ENCODE measurements at regions of chr2 and their contacts with region 1.

Region 1: GRCh38 chr2:150535176-150535575 is 47.7 kb upstream of the RND3 start:
- DNase-seq: no peak
- ATAC-seq: no peak
- H3K4me3 ChIP-seq: no peak overlapping the region
- H3K27ac ChIP-seq: no peak overlapping the region
- H3K4me1 ChIP-seq: peaks cover 21% of the 10 kb centered on the region
- H3K27me3 ChIP-seq: no peaks in the 10 kb centered on the region
- CTCF ChIP-seq: no peak
- POLR2A ChIP-seq: no peak
- RAD21 ChIP-seq: no peak

Region 2: DNA sequence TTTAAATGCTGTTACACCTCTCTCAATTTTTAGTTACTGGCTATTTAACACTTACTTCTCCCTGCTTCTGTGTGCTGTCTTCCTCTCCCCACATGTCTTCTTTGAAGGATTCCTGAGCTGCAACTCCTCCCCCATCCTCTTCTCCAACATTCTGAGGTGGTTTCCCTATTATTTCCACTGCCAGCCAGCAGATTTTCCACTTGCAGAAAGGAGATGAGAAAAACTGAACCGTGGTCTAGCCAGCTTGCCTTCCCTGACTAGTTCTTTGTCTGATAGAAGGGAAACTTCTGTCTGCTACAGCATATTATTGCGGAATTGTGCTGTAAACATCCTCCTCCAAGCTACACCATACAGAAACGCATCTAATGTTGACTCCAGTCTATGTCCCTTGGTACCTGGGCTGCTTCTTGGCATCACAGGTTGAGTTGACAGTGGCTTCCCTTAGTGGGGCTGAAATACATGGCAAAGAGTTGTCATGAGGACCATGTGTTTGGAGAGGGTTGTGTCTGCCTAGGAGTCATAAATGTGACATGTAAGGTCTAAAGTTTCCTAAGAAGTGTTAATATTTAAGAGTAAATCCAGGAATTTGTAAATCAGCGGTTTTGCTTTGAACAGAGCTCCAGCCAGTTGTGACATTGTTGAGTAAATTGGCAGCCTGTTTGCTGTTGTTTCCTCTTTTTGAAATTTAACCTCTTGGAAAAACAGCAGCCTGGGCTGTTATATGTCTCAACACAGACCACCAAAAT is 20.6 kb after region 1 on chr2:
- CTCF ChIA-PET with region 1: interaction called, 3 read pairs
- POLR2A ChIA-PET with region 1: interaction called, 10 read pairs
- dilution Hi-C with region 1: no loop called
- in situ Hi-C with region 1: no loop called
- intact Hi-C with region 1: no loop called
- DNase-seq: no peak
- ATAC-seq: no peak; the same call in 1 of the 2 replicates
- H3K4me3 ChIP-seq: no peak overlapping the region
- H3K27ac ChIP-seq: no peak overlapping the region
- H3K4me1 ChIP-seq: peaks cover 9% of the 10 kb centered on the region
- H3K27me3 ChIP-seq: no peaks in the 10 kb centered on the region
- CTCF ChIP-seq: no peak
- POLR2A ChIP-seq: no peak
- RAD21 ChIP-seq: no peak

Measured in IMR-90 (cell line).